Activated CD4-positive, alpha-beta T cell treated with anti-CD3 and anti-CD28 coated beads, Interleukin-2, amount 10 ng/mL, durations not matched to agents 24 days and 14 days (primary cell): ENCODE measurements at regions of chr10 and their contacts with region 1.

Region 1: GRCh38 chr10:72337020-72337629 is 17.6 kb downstream of the DNAJB12 start:
- DNase-seq: peak; percentile 91
- H3K4me3 Mint-ChIP-seq: peak overlapping the region; percentile 44
- H3K27ac Mint-ChIP-seq: peak overlapping the region; percentile 88
- H3K4me1 Mint-ChIP-seq: peaks cover 52% of the 10 kb centered on the region
- H3K27me3 Mint-ChIP-seq: no peaks in the 10 kb centered on the region

Region 2: DNA sequence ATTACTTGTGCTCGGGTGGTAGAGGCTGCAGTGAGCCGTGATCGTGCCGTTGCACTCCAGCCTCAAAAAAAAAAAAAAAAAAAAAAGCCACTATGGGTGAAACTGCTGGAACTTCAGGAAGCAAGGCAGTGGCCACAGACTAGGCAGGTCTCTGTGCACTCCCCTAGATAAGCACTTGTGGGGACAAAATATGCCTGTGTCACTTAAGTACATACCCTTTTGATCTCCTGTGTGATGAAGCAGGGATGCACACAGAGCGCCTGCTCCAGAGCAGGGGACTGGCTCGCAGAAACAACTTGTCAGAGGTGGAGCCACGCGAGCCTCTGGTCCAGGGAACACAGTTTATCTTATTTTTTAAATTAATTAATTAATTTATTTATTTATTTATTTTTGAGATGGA is 443.2 kb before region 1 on chr10:
- intact Hi-C with region 1: loop called (anchors 2 kb)
- DNase-seq: no peak
- H3K4me3 Mint-ChIP-seq: no peak overlapping the region
- H3K27ac Mint-ChIP-seq: no peak overlapping the region
- H3K4me1 Mint-ChIP-seq: peaks cover 6% of the 10 kb centered on the region
- H3K27me3 Mint-ChIP-seq: peaks cover 4% of the 10 kb centered on the region

Region 3: GRCh38 chr10:72048450-72049124 is 288.5 kb before region 1 on chr10:
- intact Hi-C with region 1: loop called (anchors 1 kb)
- DNase-seq: peak; percentile 95
- H3K4me3 Mint-ChIP-seq: no peak overlapping the region
- H3K27ac Mint-ChIP-seq: peak overlapping the region; percentile 72
- H3K4me1 Mint-ChIP-seq: peaks cover 6% of the 10 kb centered on the region
- H3K27me3 Mint-ChIP-seq: no peaks in the 10 kb centered on the region

Region 4: GRCh38 chr10:72126184-72126871 is 210.8 kb before region 1 on chr10:
- intact Hi-C with region 1: loop called (anchors 2 kb)
- DNase-seq: peak; percentile 65
- H3K4me3 Mint-ChIP-seq: no peak overlapping the region
- H3K27ac Mint-ChIP-seq: no peak overlapping the region
- H3K4me1 Mint-ChIP-seq: peaks cover 25% of the 10 kb centered on the region
- H3K27me3 Mint-ChIP-seq: no peaks in the 10 kb centered on the region

Region 5: GRCh38 chr10:72630144-72630543 is 293.0 kb after region 1 on chr10:
- intact Hi-C with region 1: no loop called
- DNase-seq: no peak
- H3K4me3 Mint-ChIP-seq: no peak overlapping the region
- H3K27ac Mint-ChIP-seq: no peak overlapping the region
- H3K4me1 Mint-ChIP-seq: peaks cover 4% of the 10 kb centered on the region
- H3K27me3 Mint-ChIP-seq: peaks cover 8% of the 10 kb centered on the region